Activated naive CD4-positive, alpha-beta T cell treated with anti-CD3 and anti-CD28 coated beads for 36 hours (primary cell): ENCODE measurements at regions of chr7 and their contacts with region 1.

Region 1: GRCh38 chr7:17159500-17160037 is 138.9 kb upstream of the AHR start:
- DNase-seq: peak; percentile 45
- H3K4me3 Mint-ChIP-seq: no peak overlapping the region
- H3K27ac Mint-ChIP-seq: peak overlapping the region; percentile 76
- H3K4me1 Mint-ChIP-seq: peaks cover 21% of the 10 kb centered on the region
- H3K27me3 Mint-ChIP-seq: peaks cover 2% of the 10 kb centered on the region

Region 2: GRCh38 chr7:16982640-16983350 is 176.8 kb before region 1 on chr7:
- CTCF ChIA-PET with region 1: no interaction called
- intact Hi-C with region 1: loop called (anchors 2 kb)
- DNase-seq: peak; percentile 30
- H3K4me3 Mint-ChIP-seq: no peak overlapping the region
- H3K27ac Mint-ChIP-seq: no peak overlapping the region
- H3K4me1 Mint-ChIP-seq: peaks cover 2% of the 10 kb centered on the region
- H3K27me3 Mint-ChIP-seq: peaks cover 7% of the 10 kb centered on the region

Region 3: GRCh38 chr7:17126413-17127268 is 32.9 kb before region 1 on chr7:
- CTCF ChIA-PET with region 1: no interaction called
- intact Hi-C with region 1: loop called (anchors 1 kb)
- DNase-seq: no peak
- H3K4me3 Mint-ChIP-seq: no peak overlapping the region
- H3K27ac Mint-ChIP-seq: no peak overlapping the region
- H3K4me1 Mint-ChIP-seq: peaks cover 23% of the 10 kb centered on the region
- H3K27me3 Mint-ChIP-seq: no peaks in the 10 kb centered on the region

Region 4: DNA sequence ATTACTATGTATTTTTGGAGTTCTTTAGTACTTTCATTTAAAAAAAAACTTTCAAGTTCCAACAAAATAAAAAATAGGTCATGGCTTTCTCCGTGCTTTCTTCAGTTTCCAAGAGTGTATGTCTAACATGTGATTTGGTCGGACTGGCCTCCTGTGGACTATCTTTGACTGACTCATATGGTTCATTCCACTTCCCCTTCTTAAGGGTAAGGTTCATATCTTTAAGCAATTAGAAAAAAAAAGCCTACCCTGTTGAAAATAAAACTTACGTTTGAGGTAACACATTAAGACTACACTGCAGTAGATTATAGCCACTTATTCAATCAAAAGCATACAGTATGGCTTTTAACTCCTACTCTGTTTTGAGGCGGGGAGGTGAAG is 26.1 kb after region 1 on chr7:
- CTCF ChIA-PET with region 1: no interaction called
- intact Hi-C with region 1: loop called (anchors 1 kb)
- DNase-seq: no peak
- H3K4me3 Mint-ChIP-seq: no peak overlapping the region
- H3K27ac Mint-ChIP-seq: no peak overlapping the region
- H3K4me1 Mint-ChIP-seq: peaks cover 14% of the 10 kb centered on the region
- H3K27me3 Mint-ChIP-seq: no peaks in the 10 kb centered on the region

Region 5: GRCh38 chr7:17304926-17305325 is 145.4 kb after region 1 on chr7:
- CTCF ChIA-PET with region 1: interaction called, 5 read pairs
- intact Hi-C with region 1: loop called (anchors 1 kb)
- DNase-seq: peak; percentile 41
- H3K4me3 Mint-ChIP-seq: peak overlapping the region; percentile 34
- H3K27ac Mint-ChIP-seq: peak overlapping the region; percentile 79
- H3K4me1 Mint-ChIP-seq: peaks cover 32% of the 10 kb centered on the region
- H3K27me3 Mint-ChIP-seq: no peaks in the 10 kb centered on the region